ENCODE measurements at regions of chr17 and their contacts with region 1.

Region 1: GRCh38 chr17:71486261-71486660 is 634.6 kb upstream of the SOX9 start:
- DNase-seq: peak; percentile 33
- H3K4me3 ChIP-seq: no peak overlapping the region
- H3K27ac ChIP-seq: no peak overlapping the region
- H3K4me1 ChIP-seq: peaks cover 6% of the 10 kb centered on the region
- H3K27me3 ChIP-seq: no peaks in the 10 kb centered on the region
- CTCF ChIP-seq: no peak

Region 2: GRCh38 chr17:71530248-71530647 is 44.0 kb after region 1 on chr17:
- CTCF ChIA-PET with region 1: no interaction called
- dilution Hi-C with region 1: no loop called
- in situ Hi-C with region 1: no loop called
- intact Hi-C with region 1: loop called (anchors 5 kb)
- DNase-seq: peak; percentile 99
- H3K4me3 ChIP-seq: no peak overlapping the region
- H3K27ac ChIP-seq: peak overlapping the region; percentile 39
- H3K4me1 ChIP-seq: peaks cover 51% of the 10 kb centered on the region
- H3K27me3 ChIP-seq: no peaks in the 10 kb centered on the region
- CTCF ChIP-seq: no peak

Measured in mammary epithelial cell (primary cell).